Activated T-helper 2 cell treated with anti-CD3 and anti-CD28 coated beads, Interferon-gamma antibody, Interleukin-2, Interleukin-4, amounts not matched to agents 10 μg/mL and 5 μg/mL and 100 μg/mL, durations not matched to agents 14 hours and 24 hours and 36 hours (primary cell): ENCODE measurements at regions of chr17 and their contacts with region 1.

Region 1: DNA sequence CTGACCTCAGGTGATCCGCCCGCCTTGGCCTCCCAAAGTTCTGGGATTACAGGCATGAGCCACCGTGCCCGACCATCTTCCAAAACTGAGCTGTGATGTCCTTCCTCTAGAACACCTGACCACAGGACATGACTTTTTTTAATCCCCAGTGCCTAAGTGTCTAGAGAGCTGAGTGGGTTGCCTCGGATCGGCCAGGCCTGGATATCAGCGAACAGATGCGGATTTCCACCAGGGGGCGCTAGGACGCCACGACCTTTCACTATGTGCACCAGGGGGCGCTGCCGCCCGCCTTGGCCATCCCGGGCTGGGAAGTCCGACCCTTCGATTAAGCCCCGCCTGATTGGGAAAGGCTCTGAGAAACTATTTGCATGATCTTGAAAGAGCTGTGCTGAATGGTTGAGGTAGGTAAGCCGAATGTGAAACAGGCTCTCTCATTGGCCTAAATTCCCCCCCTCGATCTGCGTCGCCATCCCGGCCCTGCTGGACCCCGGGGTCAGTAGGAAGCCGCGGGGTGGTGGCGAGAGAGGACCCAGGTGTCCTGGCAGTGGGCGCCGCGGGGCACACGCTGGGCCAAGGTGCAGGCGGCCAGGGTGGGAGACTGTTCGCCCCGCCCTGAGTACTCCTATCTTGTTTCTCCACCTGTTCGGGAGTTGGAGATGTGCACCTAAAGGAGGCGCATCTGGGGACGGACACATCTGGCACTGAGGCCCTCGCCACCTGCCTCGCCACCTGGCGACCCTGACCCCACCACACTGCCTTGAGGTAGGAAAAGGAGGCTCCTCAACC is at the start of gene ACBD4:
- DNase-seq: peak; percentile 94
- H3K4me3 Mint-ChIP-seq: peak within 1 kb of the TSS; percentile 85
- H3K27ac Mint-ChIP-seq: peak within 1 kb of the TSS; percentile 58
- H3K4me1 Mint-ChIP-seq: peaks cover 13% of the 10 kb centered on the region
- H3K27me3 Mint-ChIP-seq: peaks cover 6% of the 10 kb centered on the region
- total RNA-seq, gene ACBD4: 12.8 and 15.9 TPM in 2 replicates

Region 2: GRCh38 chr17:44775136-44775837 is 360.1 kb before region 1 on chr17:
- intact Hi-C with region 1: loop called (anchors 5 kb)
- DNase-seq: peak; percentile 97
- H3K4me3 Mint-ChIP-seq: peak overlapping the region; percentile 83
- H3K27ac Mint-ChIP-seq: no peak overlapping the region
- H3K4me1 Mint-ChIP-seq: peaks cover 7% of the 10 kb centered on the region
- H3K27me3 Mint-ChIP-seq: peaks cover 10% of the 10 kb centered on the region

Region 3: DNA sequence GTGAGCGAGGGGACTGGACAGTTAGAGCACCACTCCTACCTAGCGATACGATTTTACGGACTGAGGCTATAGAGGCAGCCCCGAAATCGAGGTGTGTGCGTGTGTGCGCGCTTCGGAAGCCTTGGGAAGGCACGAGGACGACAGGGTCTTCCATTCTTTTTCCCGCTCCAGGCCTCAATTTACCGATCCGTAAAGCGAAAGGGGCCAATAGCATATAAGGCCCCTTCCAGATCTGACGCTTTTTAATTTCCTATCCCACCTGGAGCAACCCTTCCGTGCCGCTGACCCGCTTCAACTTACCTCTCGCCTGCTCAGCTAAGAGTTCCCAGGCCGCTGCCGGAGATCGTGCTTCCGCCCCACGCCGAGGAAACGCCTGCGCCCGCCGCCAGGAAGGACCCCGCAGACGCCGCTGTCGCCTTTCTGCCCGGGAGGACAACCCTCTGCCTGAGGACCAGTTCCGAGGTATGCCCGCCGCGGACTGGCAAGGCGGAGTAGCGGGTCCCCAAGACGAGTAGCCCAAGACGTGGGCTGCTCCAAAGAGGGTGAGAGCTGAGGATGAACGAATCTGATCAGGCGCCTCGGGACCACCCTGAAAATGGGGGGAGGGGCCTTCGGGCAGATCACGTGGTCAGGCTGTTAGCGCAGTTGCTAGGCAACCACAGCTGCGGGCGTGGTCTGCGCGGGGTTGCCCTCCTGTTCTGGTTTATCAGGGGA is 236.2 kb before region 1 on chr17 and contains the start of gene EFTUD2:
- intact Hi-C with region 1: loop called (anchors 5 kb)
- DNase-seq: peak; percentile 88
- H3K4me3 Mint-ChIP-seq: peak within 1 kb of the TSS; percentile 97
- H3K27ac Mint-ChIP-seq: peak within 1 kb of the TSS; percentile 95
- H3K4me1 Mint-ChIP-seq: peaks cover 17% of the 10 kb centered on the region
- H3K27me3 Mint-ChIP-seq: peaks cover 12% of the 10 kb centered on the region
- total RNA-seq, gene EFTUD2: 194 and 215 TPM in 2 replicates

Region 4: DNA sequence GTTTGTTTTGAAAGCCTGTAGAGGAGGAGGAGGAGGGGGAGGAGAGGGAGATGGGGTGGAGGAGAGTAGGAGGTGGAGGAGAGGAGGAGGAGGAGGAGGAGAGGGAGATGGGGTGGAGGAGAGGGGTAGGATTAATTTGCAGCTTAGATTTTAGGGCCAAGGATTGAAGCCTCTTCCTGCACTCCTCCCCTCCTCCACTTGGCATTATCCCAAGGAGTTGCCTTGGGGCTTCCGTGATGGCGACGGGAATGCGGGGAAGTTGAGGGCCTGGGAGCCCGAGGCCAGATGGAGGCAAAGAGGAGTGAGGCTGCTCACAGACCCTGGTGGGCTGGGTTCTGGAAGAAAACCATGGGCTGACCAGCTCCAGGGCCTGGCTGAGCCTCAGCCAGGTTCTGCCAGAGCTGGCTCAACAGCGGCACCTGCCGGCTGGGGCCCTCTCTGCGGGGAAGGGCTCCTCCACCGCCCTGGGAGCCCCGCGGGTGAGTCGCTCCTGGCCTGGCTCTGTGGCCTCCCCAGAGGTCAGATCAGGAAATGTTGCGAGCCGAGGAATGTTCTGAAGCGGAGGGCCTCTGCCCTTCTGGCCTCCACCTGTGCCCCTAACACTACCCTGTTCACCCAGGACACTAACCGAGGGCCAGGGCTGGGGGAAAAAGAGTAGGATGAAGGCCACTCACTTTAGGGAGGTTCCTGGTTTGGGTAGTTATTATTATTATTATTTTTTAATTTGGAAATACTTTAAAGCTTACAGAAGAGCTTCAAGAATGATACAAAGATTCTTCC is 62.4 kb after region 1 on chr17:
- intact Hi-C with region 1: loop called (anchors 1 kb)
- DNase-seq: peak; percentile 76
- H3K4me3 Mint-ChIP-seq: no peak overlapping the region
- H3K27ac Mint-ChIP-seq: no peak overlapping the region
- H3K4me1 Mint-ChIP-seq: peaks cover 4% of the 10 kb centered on the region
- H3K27me3 Mint-ChIP-seq: no peaks in the 10 kb centered on the region

Region 5: GRCh38 chr17:45247429-45248131 is 112.2 kb after region 1 on chr17:
- intact Hi-C with region 1: loop called (anchors 1 kb)
- DNase-seq: peak; percentile 95
- H3K4me3 Mint-ChIP-seq: peak overlapping the region; percentile 91
- H3K27ac Mint-ChIP-seq: peak overlapping the region; percentile 91
- H3K4me1 Mint-ChIP-seq: peaks cover 53% of the 10 kb centered on the region
- H3K27me3 Mint-ChIP-seq: no peaks in the 10 kb centered on the region